Activated T-helper 1 cell treated with anti-CD3 and anti-CD28 coated beads, Interleukin-12 subunit alpha, Interleukin-12 subunit beta, Interleukin-2, Interleukin-4 antibody, amounts not matched to agents 30 ng/mL and 10 ng/mL and 1 ng/mL, durations not matched to agents 14 hours and 24 hours and 36 hours (primary cell): ENCODE measurements at regions of chr21 and their contacts with region 1.

Region 1: DNA sequence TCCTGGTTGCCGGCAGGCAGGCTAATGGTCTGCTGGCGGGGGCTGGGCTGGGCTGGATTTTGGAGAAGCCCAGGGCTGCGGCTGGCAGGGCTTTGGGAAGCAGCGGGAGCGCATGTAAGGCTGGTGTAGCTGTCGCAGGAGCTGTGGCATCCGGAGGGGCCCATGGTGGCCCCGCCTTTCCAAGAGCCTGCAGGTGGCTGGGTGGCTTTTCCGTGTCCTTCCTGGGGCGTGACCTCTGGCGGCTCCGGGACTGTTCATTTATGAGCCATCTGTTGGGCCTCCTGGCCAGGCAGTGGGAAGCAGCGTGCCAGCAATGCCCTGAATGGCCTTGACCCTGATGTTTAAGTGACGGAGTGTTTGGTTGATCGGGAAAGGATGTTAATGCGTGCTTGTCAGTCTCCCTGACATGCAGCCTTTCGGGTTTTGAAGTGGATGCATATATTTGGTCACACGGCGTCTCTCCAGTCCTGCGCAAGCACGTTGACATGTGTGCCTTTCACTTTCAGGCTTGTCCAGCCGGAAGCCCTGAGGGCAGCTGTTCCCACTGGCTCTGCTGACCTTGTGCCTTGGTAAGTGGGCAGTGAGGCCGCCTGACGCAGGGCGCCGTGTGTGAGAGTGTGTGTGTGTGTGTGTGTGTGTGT is 38.5 kb downstream of the AGPAT3 start:
- DNase-seq: no peak
- H3K4me3 Mint-ChIP-seq: no peak overlapping the region
- H3K27ac Mint-ChIP-seq: no peak overlapping the region
- H3K4me1 Mint-ChIP-seq: peaks cover 4% of the 10 kb centered on the region
- H3K27me3 Mint-ChIP-seq: no peaks in the 10 kb centered on the region

Region 2: DNA sequence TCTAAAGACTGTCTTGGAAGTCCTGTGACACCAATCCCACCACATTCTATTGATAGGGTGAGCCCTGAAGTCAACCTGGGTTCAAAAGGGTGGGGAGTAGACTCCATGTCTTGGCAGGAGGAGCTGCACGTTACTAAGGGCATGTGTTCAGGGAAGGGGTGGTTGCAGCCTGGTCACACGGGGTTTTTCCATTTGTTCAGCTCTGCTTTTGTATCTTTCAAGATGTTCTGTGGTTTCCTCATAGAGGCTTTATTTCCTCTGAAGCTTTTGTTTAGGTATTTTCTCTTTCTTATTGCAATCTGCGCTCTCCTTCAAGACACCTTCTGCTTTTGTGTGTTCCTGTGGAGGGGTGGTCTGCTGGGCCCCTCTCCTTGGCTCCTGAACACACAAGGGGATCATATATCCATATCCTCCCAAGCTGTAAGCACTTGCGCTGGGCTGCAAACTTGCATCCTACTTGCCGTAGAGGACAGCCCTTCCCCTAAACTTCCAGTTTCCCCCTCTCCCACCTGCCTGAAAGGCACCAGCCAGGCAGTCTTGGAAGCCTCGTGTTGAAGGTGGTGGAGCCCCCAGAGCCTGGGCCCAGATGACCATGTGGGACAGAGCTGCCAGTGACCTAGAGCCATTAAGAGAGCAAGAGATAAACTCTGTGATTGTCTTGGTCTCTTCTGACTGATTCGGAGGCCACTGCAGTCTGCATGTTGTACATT is 46.1 kb after region 1 on chr21:
- intact Hi-C with region 1: loop called (anchors 2 kb)
- DNase-seq: peak; percentile 14
- H3K4me3 Mint-ChIP-seq: no peak overlapping the region
- H3K27ac Mint-ChIP-seq: peak overlapping the region; percentile 64
- H3K4me1 Mint-ChIP-seq: peaks cover 15% of the 10 kb centered on the region
- H3K27me3 Mint-ChIP-seq: no peaks in the 10 kb centered on the region

Region 3: DNA sequence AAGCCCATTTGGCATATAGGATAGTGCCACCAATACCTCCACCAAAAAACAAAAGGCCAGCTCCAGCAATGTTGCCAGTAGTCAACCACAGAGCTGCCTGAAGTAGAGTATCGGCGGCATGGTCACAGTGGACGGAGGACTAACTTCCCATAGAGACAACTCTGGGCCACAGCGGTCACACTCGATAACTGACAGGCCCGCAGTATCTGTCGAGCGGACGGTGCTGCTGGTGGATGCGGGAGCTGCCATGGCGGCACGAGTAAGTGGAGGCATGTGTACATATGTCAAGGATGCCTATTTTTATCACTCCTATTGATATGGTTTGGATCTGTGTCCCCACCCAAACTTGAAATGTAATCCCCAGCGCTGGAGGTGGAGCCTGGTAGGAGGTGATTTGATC is 774.3 kb after region 1 on chr21:
- intact Hi-C with region 1: no loop called
- DNase-seq: no peak
- H3K4me3 Mint-ChIP-seq: no peak overlapping the region
- H3K27ac Mint-ChIP-seq: no peak overlapping the region
- H3K4me1 Mint-ChIP-seq: no peaks in the 10 kb centered on the region
- H3K27me3 Mint-ChIP-seq: peaks cover 37% of the 10 kb centered on the region